ENCODE measurements at regions of chr5 and their contacts with region 1.

Region 1: GRCh38 chr5:73273379-73274065 is 100.5 kb downstream of the TMEM174 start:
- DNase-seq: no peak
- H3K4me3 ChIP-seq: no peak overlapping the region
- H3K27ac ChIP-seq: no peak overlapping the region
- H3K4me1 ChIP-seq: no peaks in the 10 kb centered on the region
- CTCF ChIP-seq: no peak

Region 2: DNA sequence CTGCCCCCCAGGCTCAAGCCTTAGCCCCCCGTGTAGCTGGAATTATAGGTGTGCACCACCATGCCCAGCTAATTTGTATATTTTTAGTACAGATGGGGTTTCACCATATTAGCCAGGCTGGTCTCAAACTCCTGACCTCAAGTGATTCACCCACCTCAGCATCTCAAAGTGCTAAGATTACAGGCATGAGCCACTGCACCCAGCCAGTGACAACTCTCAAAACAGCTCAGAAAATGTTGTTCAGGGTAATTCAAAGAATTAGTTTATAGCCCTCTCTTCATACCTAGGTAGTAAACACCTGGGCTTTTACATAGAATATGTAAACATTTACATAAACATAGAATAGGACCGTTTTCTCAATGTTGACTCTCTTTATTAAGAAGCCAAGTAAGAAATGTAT is 1198.4 kb after region 1 on chr5:
- CTCF ChIA-PET with region 1: no interaction called
- POLR2A ChIA-PET with region 1: interaction called, 11 read pairs
- intact Hi-C with region 1: no loop called
- DNase-seq: no peak
- H3K4me3 ChIP-seq: no peak overlapping the region
- H3K27ac ChIP-seq: no peak overlapping the region
- H3K4me1 ChIP-seq: peaks cover 9% of the 10 kb centered on the region
- CTCF ChIP-seq: no peak